PC-9 (cell line): ENCODE measurements at regions of chr1 and their contacts with region 1.

Region 1: DNA sequence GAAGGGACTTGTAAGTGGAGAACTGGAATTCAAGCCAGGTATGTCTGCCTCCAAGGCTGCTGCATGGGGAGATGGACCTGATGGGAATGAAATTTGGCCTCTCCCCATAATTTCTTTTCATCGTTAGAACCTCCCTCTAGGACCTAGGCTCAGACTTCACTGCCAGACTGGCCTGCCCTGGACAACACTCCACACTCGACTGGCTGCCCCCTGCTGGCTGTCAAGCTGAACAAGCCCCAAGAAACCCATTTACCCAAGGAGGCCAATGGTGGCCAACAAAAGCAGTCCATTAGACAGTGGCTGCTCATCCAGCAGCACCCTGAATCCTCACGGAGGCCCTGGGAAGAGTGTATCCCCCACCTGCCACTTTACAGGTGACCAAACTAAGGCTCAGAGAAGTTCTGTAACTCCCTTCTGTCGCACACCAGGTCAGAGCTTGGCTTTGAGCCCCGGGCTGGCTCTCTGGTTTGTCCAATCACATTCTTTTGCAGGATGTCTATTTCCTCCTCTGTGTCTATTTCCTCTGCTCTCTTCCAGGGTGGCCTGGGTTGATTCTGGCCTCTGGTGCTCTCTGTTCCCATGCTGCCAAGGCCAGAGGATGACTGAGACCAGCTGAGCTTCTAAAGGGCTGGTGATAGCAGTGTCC is 3.8 kb downstream of the RNF186 start:
- DNase-seq: no peak
- H3K4me3 ChIP-seq: no peak overlapping the region
- H3K27ac ChIP-seq: no peak overlapping the region
- H3K4me1 ChIP-seq: no peaks in the 10 kb centered on the region; the same call in 1 of the 2 replicates
- H3K27me3 ChIP-seq: no peaks in the 10 kb centered on the region
- CTCF ChIP-seq: peak; percentile 58

Region 2: DNA sequence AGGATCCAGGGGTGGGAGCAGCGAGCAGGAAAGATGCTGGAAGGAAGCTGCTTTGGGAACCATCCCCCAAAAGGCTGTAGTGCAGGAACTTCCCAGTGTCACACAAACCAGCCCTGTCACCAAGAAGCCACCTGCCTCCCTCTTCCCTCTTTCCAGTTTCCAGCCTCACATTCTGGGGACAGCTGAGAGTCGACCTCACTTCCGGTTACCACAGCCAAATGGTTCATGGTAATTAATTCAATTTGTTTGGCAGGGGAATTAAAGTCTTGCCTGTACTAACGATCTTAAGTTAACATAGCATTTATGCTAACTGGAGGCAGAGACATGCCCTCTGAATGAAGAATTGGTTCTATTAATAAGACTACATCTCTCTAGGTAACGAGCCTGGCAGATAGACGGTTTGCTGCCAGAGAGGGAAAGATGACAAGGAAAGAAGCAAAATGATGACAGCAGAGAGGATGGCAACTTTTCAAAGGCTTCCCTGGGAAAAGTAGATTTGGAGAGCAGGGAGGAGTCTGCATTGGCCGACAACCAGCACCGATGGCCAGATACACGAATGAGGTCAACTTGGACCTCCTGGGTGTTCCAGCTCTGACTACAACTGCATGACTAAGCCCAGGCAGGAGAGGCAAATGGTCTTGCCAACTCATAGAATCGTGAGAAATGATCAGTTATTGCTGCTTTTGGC is 75.7 kb before region 1 on chr1:
- CTCF ChIA-PET with region 1: no interaction called
- POLR2A ChIA-PET with region 1: no interaction called
- intact Hi-C with region 1: loop called (anchors 2 kb)
- DNase-seq: no peak
- H3K4me3 ChIP-seq: no peak overlapping the region
- H3K27ac ChIP-seq: no peak overlapping the region
- H3K4me1 ChIP-seq: peaks cover 11% of the 10 kb centered on the region
- H3K27me3 ChIP-seq: no peaks in the 10 kb centered on the region
- CTCF ChIP-seq: no peak